Dorsolateral prefrontal cortex (tissue), 120 donors: ENCODE measurements at regions of chr4 and their contacts with region 1.

Region 1: DNA sequence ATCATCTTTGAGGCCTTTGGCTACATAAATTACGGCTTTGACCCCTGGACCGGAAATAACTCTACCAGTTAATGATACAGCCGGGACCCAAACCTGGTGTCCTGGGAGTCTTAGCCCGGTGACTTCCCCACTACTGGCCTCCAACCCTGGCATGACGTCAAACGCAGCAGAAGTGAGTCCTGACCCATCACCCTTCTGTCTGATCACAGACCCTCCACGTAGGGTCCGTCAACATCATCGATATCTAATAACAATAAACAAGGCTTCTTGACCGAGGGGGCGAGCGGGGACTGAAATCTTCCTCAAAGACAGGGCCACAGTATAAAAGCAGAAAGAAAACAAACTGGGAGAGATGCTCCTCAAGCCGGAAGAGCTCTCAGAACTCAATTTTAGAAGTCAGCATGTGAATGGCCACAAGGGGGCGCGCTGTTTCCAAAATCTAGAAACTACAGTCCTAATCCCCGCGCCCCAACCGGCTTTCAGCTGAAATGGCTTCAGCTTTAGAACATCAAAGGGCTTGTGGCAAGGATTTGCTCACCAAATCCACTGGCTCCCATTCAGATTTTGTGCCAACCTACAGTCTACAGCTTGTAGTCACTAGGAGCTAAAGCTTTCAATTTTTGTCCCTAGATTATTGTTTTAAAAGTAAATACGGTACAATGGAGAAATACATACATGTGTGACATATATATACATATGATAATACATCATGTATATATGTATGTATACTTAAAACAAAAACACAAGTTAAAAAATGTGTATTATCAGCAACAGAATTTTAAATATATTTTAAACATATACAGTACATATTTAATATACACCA is 46.4 kb upstream of the ENPP6 start:
- DNase-seq: peak; percentile 87 to 97 (median 94)
- H3K4me3 ChIP-seq: peak overlapping the region in 11 of 59 donors; percentile 6 to 45 (median 19)
- H3K27ac ChIP-seq: peak overlapping the region in 45 of 59 donors; percentile 8 to 86 (median 66)
- H3K27me3 ChIP-seq: no peaks in the 10 kb centered on the region
- CTCF ChIP-seq: peak; percentile 90 to 99 (median 96)

Region 2: GRCh38 chr4:184217634-184218033 is 46.5 kb before region 1 on chr4 and contains the start of gene ENPP6:
- intact Hi-C with region 1: no loop called
- DNase-seq: no peak
- H3K4me3 ChIP-seq: peak within 1 kb of the TSS in 55 of 59 donors; percentile 9 to 71 (median 43)
- H3K27ac ChIP-seq: peak within 1 kb of the TSS in 38 of 59 donors; percentile 1 to 82 (median 58)
- H3K27me3 ChIP-seq: peaks cover 0 to 3% (median 0%) of the 10 kb centered on the region in 45 donors
- CTCF ChIP-seq: no peak
- total RNA-seq, gene ENPP6: 1.8 to 35.2 (median 8.0) TPM

Region 3: DNA sequence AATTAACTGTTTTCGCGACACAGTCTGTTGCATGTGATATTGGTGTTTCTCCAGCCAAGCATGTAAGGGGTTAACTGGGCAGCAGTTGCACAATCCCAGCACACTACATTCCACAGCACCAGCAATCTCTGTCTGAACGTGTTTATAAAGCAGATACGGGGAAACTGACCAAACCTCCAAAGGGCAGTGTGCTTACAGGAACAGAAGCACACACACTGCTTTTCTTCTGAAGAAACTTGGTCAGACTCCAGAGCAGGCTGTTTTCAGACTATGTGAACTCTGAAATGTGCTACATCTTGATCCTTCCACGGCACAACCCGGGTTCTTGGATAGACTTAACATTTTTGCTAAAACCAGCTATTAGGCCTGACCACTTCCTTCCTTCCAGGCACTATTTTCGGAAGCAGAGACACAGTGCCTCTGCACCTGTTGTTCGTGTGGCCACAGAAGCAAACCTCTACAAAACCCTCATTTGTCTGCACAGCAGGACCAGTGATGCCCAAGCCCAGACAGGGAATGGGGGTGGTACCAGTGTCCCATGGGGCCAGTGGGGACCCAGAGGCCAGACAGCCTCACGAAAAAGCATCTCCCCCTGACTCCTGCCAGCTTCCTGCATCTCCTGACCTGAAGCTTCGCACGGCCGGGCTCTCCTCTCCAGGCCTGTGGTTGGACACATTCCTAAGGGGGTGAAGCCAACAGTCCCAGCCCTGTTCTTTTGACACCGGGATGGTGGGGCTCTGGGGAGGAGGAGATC is 120.1 kb after region 1 on chr4:
- intact Hi-C with region 1: loop called in 1 of 2 experiments (anchors 5 kb)
- DNase-seq: peak in 1 of 10 donors; percentile 19
- H3K4me3 ChIP-seq: peak overlapping the region in 40 of 59 donors; percentile 2 to 52 (median 22)
- H3K27ac ChIP-seq: peak overlapping the region in 58 of 59 donors; percentile 3 to 87 (median 66)
- H3K27me3 ChIP-seq: no peaks in the 10 kb centered on the region
- CTCF ChIP-seq: no peak

Region 4: GRCh38 chr4:184538023-184538599 is 274.0 kb after region 1 on chr4:
- intact Hi-C with region 1: loop called (anchors 1 to 2 kb)
- DNase-seq: peak; percentile 61 to 93 (median 87)
- H3K4me3 ChIP-seq: peak overlapping the region; percentile 51 to 97 (median 82)
- H3K27ac ChIP-seq: peak overlapping the region; percentile 76 to 99 (median 96)
- H3K27me3 ChIP-seq: no peaks in the 10 kb centered on the region
- CTCF ChIP-seq: peak; percentile 23 to 89 (median 80)

Region 5: GRCh38 chr4:184733654-184734524 is 469.8 kb after region 1 on chr4 and contains the start of gene CENPU:
- intact Hi-C with region 1: loop called in 1 of 2 experiments (anchors 10 kb)
- DNase-seq: peak; percentile 91 to 97 (median 96)
- H3K4me3 ChIP-seq: peak within 1 kb of the TSS; percentile 49 to 100 (median 84)
- H3K27ac ChIP-seq: peak within 1 kb of the TSS in 45 of 59 donors; percentile 4 to 84 (median 66)
- H3K27me3 ChIP-seq: no peaks in the 10 kb centered on the region
- CTCF ChIP-seq: peak in 27 of 56 donors; percentile 9 to 54 (median 30)
- total RNA-seq, gene CENPU: 0.33 to 3.8 (median 1.1) TPM in 106 of 120 experiments, not detected in the others